ENCODE measurements at regions of chr7 and their contacts with region 1.

Region 1: GRCh38 chr7:23013715-23014649 is at the start of gene HYCC1:
- DNase-seq: peak; percentile 99
- H3K4me3 Mint-ChIP-seq: peak within 1 kb of the TSS; percentile 89
- H3K27ac Mint-ChIP-seq: peak within 1 kb of the TSS; percentile 78
- H3K4me1 Mint-ChIP-seq: peaks cover 7% of the 10 kb centered on the region
- H3K27me3 Mint-ChIP-seq: peaks cover 3% of the 10 kb centered on the region
- total RNA-seq, gene HYCC1: 19.5 to 19.7 TPM

Region 2: DNA sequence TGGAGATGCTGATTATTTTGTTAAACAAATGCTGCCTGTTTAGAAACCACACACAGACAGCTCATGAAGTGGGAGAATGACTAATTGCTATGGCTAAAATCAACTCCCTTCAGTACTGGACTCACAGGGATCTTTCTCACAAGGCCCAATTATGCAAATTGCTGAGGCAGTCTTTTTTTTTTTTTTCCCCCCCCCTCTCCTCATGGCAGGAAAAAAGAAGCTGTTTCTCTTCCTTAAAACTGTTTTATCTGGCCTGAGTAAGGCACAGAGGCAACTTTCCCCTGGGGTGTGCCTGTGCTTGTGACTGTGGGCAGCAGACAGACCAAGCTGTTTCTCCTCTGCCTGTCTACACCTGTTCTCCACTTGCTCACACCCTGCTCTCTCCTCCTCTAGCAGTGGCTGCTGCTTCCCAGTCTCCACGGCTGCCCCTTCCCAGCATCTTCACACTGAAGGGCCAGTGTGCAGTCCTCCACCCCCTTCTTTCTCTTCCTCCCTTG is 448.6 kb before region 1 on chr7:
- CTCF ChIA-PET with region 1: no interaction called
- intact Hi-C with region 1: loop called (anchors 1 kb)
- DNase-seq: no peak
- H3K4me3 Mint-ChIP-seq: no peak overlapping the region
- H3K27ac Mint-ChIP-seq: no peak overlapping the region
- H3K4me1 Mint-ChIP-seq: peaks cover 45% of the 10 kb centered on the region
- H3K27me3 Mint-ChIP-seq: peaks cover 29% of the 10 kb centered on the region

Region 3: DNA sequence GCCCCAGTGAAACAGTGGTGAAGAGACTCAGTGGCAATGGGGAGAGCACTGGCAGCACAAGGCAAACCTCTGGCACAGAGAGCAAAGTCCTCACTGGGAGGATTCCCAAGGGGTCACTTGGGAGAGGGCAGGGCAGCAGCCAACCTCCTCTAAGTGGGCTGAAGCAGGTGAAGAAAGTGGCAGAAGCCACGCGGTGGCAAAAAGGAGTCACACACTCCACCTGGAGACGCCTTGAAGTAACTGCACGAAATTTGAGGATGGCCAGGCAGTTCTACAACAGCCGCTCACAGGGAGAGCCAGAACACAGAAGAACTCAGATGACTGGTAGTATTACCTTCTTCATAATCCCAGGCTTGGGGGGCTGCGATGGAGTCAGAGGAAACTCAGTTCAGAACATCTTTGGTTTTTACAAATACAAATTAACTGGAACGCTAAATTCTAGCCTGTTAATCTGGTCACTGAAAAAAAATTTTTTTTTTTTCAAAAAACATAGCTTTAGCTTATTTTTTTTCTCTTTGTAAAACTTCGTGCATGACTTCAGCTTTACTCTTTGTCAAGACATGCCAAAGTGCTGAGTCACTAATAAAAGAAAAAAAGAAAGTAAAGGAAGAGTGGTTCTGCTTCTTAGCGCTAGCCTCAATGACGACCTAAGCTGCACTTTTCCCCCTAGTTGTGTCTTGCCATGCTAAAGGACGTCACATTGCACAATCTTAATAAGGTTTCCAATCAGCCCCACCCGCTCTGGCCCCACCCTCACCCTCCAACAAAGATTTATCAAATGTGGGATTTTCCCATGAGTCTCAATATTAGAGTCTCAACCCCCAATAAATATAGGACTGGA is 287.4 kb before region 1 on chr7:
- CTCF ChIA-PET with region 1: no interaction called
- intact Hi-C with region 1: no loop called
- DNase-seq: peak; percentile 76
- H3K4me3 Mint-ChIP-seq: peak overlapping the region; percentile 70
- H3K27ac Mint-ChIP-seq: peak overlapping the region; percentile 89
- H3K4me1 Mint-ChIP-seq: peaks cover 30% of the 10 kb centered on the region
- H3K27me3 Mint-ChIP-seq: peaks cover 24% of the 10 kb centered on the region

Region 4: GRCh38 chr7:22822486-22823141 is 191.4 kb before region 1 on chr7 and contains the start of gene TOMM7:
- CTCF ChIA-PET with region 1: no interaction called
- intact Hi-C with region 1: loop called (anchors 1 kb)
- DNase-seq: peak; percentile 92
- H3K4me3 Mint-ChIP-seq: peak within 1 kb of the TSS; percentile 99
- H3K27ac Mint-ChIP-seq: peak within 1 kb of the TSS; percentile 96
- H3K4me1 Mint-ChIP-seq: peaks cover 36% of the 10 kb centered on the region
- H3K27me3 Mint-ChIP-seq: peaks cover 10% of the 10 kb centered on the region
- total RNA-seq, gene TOMM7: 269 to 297 TPM

Region 5: GRCh38 chr7:23000597-23001360 is 13.2 kb before region 1 on chr7:
- CTCF ChIA-PET with region 1: interaction called, 3 read pairs
- intact Hi-C with region 1: loop called (anchors 1 kb)
- DNase-seq: no peak
- H3K4me3 Mint-ChIP-seq: no peak overlapping the region
- H3K27ac Mint-ChIP-seq: no peak overlapping the region
- H3K4me1 Mint-ChIP-seq: peaks cover 27% of the 10 kb centered on the region
- H3K27me3 Mint-ChIP-seq: no peaks in the 10 kb centered on the region

Region 6: DNA sequence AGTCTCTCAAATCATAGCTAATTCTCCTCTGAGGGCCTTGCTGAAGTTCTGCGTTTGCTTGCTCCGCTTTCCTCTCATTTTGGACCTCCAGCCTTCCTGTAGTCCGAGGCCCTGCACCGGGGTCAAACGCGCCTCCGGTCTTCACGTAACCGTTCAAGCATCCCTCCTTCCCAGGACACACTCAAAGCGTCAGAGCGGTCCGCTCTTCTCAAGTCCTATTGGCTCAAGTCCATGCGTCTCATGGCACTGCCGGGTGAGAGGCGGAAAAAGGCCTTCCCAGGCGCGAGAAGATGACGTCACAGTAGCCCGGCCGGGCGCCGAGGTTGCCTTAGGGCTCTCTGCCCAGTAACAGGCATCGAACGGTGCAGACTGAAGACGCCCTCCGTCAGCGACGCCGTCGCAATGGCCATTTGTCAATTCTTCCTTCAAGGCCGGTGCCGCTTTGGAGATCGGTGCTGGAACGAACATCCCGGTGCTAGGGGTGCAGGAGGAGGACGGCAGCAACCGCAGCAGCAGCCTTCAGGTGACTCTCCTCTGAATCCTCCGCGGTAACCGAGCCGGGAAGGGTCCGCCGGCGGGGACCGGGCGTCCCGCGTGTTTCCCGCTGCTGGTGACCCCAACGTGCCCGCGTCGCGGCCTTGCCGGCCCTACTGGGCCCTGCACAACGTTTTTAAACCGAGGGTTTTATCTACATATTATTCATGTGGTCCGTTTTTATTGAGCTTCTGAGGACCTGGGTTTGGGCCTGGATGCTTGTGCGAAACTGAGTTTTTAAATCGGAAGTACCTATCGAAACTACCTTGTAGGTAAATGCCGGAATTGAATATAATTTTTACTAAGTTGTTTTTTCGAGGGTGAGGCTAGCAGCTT is 167.9 kb after region 1 on chr7 and contains the start of gene NUP42:
- CTCF ChIA-PET with region 1: no interaction called
- intact Hi-C with region 1: loop called (anchors 1 kb)
- DNase-seq: peak; percentile 98
- H3K4me3 Mint-ChIP-seq: peak within 1 kb of the TSS; percentile 99
- H3K27ac Mint-ChIP-seq: peak within 1 kb of the TSS; percentile 99
- H3K4me1 Mint-ChIP-seq: peaks cover 35% of the 10 kb centered on the region
- H3K27me3 Mint-ChIP-seq: no peaks in the 10 kb centered on the region
- total RNA-seq, gene NUP42: 15.2 to 17.0 TPM

Region 7: GRCh38 chr7:23531794-23532489 is 518.0 kb after region 1 on chr7 and contains the start of gene TRA2A:
- CTCF ChIA-PET with region 1: no interaction called
- intact Hi-C with region 1: loop called (anchors 5 kb)
- DNase-seq: peak; percentile 99
- H3K4me3 Mint-ChIP-seq: peak within 1 kb of the TSS; percentile 99
- H3K27ac Mint-ChIP-seq: peak within 1 kb of the TSS; percentile 100
- H3K4me1 Mint-ChIP-seq: peaks cover 43% of the 10 kb centered on the region
- H3K27me3 Mint-ChIP-seq: no peaks in the 10 kb centered on the region
- total RNA-seq, gene TRA2A: 77.8 to 79.0 TPM

Measured in activated naive CD4-positive, alpha-beta T cell treated with anti-CD3 and anti-CD28 coated beads for 36 hours (primary cell).